Heart left ventricle (tissue), 16 donors: ENCODE measurements at regions of chr9 and their contacts with region 1.

Region 1: DNA sequence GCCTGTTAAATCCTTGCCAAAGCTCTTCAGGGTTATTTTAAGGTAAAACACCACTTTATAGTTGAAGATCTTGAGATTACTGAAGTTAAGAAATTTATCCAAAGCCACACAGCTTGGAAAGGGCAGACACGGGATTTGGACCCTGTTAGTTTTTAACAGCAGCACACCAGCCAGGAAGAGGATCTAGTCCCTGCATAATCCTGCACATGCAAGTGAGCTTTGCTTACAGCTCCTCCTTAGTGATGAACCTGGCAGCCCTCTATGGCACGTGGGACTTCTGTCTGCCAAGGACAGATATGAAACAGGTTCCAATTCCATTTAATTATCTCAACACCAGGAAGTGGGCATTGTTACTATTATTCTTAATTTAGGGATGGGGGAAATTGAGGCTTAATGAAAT is 108.7 kb downstream of the TRIM32 start:
- DNase-seq: no peak
- ATAC-seq: no peak
- H3K4me3 ChIP-seq: no peak overlapping the region
- H3K27ac ChIP-seq: no peak overlapping the region
- H3K4me1 ChIP-seq: peaks cover 0 to 2% (median 0%) of the 10 kb centered on the region in 12 donors
- H3K27me3 ChIP-seq: no peaks in the 10 kb centered on the region
- CTCF ChIP-seq: no peak
- POLR2A ChIP-seq: no peak

Region 2: DNA sequence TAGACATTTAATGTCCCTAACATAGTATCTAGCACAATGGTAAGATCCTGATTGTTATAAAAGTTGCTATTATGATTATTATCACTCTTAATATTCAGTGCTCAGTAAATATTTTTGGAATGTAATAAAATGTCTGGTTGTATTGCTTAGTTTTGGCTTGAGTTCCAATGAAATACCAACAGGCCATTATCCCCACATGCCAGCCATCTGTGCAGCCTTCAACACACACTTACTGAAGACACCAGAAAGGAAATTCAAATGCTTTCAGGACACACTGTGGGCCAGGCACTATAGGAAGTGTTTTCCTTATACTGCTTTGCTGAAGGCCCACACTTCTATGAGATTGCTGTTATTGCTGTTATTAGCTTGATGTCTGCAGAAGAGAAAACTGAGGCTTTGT is 48.8 kb after region 1 on chr9:
- intact Hi-C with region 1: loop called in 1 of 10 experiments (anchors 5 kb)
- DNase-seq: no peak
- ATAC-seq: no peak
- H3K4me3 ChIP-seq: no peak overlapping the region
- H3K27ac ChIP-seq: no peak overlapping the region
- H3K4me1 ChIP-seq: no peaks in the 10 kb centered on the region
- H3K27me3 ChIP-seq: no peaks in the 10 kb centered on the region
- CTCF ChIP-seq: no peak
- POLR2A ChIP-seq: no peak